ENCODE measurements at regions of chr17 and their contacts with region 1.

Region 1: GRCh38 chr17:42405963-42406495 is 17.0 kb downstream of the CAVIN1 start:
- DNase-seq: peak; percentile 71 to 94 (median 84)
- ATAC-seq: peak; percentile 77 to 87 (median 82)
- H3K4me3 ChIP-seq: no peak overlapping the region
- H3K27ac ChIP-seq: no peak overlapping the region
- H3K4me1 ChIP-seq: peaks cover 0 to 5% (median 2%) of the 10 kb centered on the region in 3 donors
- H3K27me3 ChIP-seq: no peaks in the 10 kb centered on the region
- CTCF ChIP-seq: peak; percentile 56 to 78 (median 68)

Region 2: GRCh38 chr17:42322382-42323267 is 83.4 kb before region 1 on chr17:
- intact Hi-C with region 1: loop called (anchors 2 to 10 kb)
- DNase-seq: peak; percentile 84 to 95 (median 92)
- ATAC-seq: peak; percentile 92 to 97 (median 96)
- H3K4me3 ChIP-seq: no peak overlapping the region
- H3K27ac ChIP-seq: no peak overlapping the region
- H3K4me1 ChIP-seq: peaks cover 0 to 4% (median 0%) of the 10 kb centered on the region in 3 donors
- H3K27me3 ChIP-seq: no peaks in the 10 kb centered on the region
- CTCF ChIP-seq: peak; percentile 92 to 99 (median 99)

Region 3: DNA sequence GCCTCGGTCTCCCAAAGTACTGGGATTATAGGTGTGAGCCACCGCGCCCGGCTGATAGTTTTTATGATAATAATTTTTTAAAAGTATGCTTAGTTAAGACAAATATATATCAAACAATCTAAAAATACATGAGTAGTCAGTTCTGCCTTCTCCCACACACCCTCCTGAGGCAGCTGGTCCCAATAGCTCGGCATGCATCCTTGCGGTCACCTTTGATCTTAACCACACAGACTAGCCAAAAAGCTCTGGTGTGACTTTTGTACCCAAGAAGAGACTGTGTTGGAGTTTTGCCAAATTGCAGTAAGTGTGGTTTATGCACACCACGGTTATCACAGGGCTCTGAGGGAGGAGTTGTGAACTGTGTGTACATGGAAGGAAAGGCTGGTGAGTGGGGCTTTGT is 78.3 kb after region 1 on chr17:
- intact Hi-C with region 1: no loop called
- DNase-seq: no peak
- ATAC-seq: peak in 2 of 4 donors; percentile 28 to 35
- H3K4me3 ChIP-seq: no peak overlapping the region
- H3K27ac ChIP-seq: no peak overlapping the region
- H3K4me1 ChIP-seq: no peaks in the 10 kb centered on the region
- H3K27me3 ChIP-seq: no peaks in the 10 kb centered on the region
- CTCF ChIP-seq: no peak

Region 4: GRCh38 chr17:42566883-42567573 is 161.0 kb after region 1 on chr17 and contains the start of gene MLX:
- intact Hi-C with region 1: no loop called
- DNase-seq: peak; percentile 91 to 99 (median 96)
- ATAC-seq: peak; percentile 76 to 83 (median 82)
- H3K4me3 ChIP-seq: peak within 1 kb of the TSS; percentile 73 to 88 (median 82)
- H3K27ac ChIP-seq: peak within 1 kb of the TSS; percentile 87 to 93 (median 90)
- H3K4me1 ChIP-seq: peaks cover 3 to 32% (median 11%) of the 10 kb centered on the region in 3 donors
- H3K27me3 ChIP-seq: no peaks in the 10 kb centered on the region
- CTCF ChIP-seq: no peak
- total RNA-seq, gene MLX: 18.6 to 26.7 (median 22.9) TPM

Measured in pancreas (tissue), 10 donors.